ENCODE measurements at regions of chr6 and their contacts with region 1.

Region 1: DNA sequence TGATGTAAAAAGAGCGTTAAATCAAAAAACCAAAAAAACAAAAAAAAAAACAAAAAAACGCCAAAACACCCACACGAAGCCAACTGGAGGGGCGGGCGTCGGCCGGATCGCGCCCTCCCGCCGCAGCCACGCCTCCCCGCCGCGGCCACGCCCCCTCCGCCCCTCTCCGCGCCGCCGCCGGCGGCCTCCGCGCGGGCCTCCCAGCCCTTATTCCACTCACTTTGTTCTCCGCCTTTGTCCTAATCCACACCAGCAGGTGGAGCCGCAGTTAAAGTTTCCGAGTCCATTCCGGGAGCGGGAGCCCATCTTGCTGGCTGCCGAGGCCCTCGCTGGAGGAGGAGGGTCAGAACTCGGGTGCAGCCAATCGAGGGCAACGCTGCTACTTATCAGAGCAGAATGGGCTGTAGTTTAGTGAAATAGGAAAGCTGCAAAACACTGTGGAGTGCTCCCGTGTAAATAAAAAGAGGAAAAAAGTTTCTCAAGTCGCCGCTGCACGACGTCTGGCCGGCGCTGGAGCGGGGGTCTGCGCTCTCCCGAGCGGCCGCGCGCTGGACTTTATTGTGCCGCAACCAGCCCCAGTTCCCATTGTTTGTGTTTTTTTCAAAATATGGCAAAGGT is at the start of gene ASF1A:
- DNase-seq: peak; percentile 96
- H3K4me3 Mint-ChIP-seq: peak within 1 kb of the TSS; percentile 88
- H3K27ac Mint-ChIP-seq: peak within 1 kb of the TSS; percentile 96
- H3K4me1 Mint-ChIP-seq: peaks cover 48% of the 10 kb centered on the region
- H3K27me3 Mint-ChIP-seq: no peaks in the 10 kb centered on the region
- total RNA-seq, gene ASF1A: 33.9 and 34.1 TPM in 2 replicates

Region 2: GRCh38 chr6:118558464-118559217 is 335.3 kb before region 1 on chr6:
- intact Hi-C with region 1: loop called (anchors 5 kb)
- DNase-seq: no peak
- H3K4me3 Mint-ChIP-seq: peak overlapping the region; percentile 69
- H3K27ac Mint-ChIP-seq: peak overlapping the region; percentile 92
- H3K4me1 Mint-ChIP-seq: peaks cover 25% of the 10 kb centered on the region
- H3K27me3 Mint-ChIP-seq: no peaks in the 10 kb centered on the region

Region 3: DNA sequence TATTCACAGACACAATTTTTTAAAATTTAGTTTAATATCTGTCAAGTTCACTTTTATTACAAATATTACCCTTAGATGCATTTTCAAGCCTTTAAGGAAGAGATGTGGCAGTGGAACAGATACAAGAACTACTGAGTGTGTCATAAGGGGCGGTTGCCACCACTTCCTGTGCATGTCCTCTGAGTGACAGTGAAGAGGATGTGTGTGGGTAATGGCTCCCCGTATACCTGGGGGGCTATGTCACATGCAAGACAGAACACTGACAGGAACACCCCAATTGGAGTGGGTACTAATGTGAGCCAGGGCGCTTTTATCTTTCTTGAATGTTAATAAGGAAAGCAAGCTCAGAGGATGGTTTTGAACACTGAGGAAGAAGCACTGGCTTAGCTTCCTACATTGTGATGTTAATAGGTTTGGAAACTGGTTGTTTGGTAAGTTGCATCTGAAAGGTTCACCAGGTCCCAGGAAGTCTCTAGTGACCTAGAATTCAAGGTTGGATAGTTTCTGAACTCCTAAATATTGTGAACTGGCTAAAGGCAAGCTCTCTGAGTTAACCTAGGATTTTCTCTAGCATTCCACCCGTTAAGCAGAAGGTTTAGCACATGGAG is 83.4 kb before region 1 on chr6:
- intact Hi-C with region 1: loop called (anchors 2 kb)
- DNase-seq: peak; percentile 56
- H3K4me3 Mint-ChIP-seq: no peak overlapping the region
- H3K27ac Mint-ChIP-seq: peak overlapping the region; percentile 52
- H3K4me1 Mint-ChIP-seq: peaks cover 54% of the 10 kb centered on the region
- H3K27me3 Mint-ChIP-seq: no peaks in the 10 kb centered on the region

Region 4: GRCh38 chr6:118934461-118935330 is 40.8 kb after region 1 on chr6 and contains the start of gene MCM9:
- intact Hi-C with region 1: loop called (anchors 1 kb)
- DNase-seq: peak; percentile 84
- H3K4me3 Mint-ChIP-seq: peak within 1 kb of the TSS; percentile 89
- H3K27ac Mint-ChIP-seq: peak within 1 kb of the TSS; percentile 96
- H3K4me1 Mint-ChIP-seq: peaks cover 29% of the 10 kb centered on the region
- H3K27me3 Mint-ChIP-seq: no peaks in the 10 kb centered on the region
- total RNA-seq, gene MCM9: 18.6 and 21.1 TPM in 2 replicates

Region 5: DNA sequence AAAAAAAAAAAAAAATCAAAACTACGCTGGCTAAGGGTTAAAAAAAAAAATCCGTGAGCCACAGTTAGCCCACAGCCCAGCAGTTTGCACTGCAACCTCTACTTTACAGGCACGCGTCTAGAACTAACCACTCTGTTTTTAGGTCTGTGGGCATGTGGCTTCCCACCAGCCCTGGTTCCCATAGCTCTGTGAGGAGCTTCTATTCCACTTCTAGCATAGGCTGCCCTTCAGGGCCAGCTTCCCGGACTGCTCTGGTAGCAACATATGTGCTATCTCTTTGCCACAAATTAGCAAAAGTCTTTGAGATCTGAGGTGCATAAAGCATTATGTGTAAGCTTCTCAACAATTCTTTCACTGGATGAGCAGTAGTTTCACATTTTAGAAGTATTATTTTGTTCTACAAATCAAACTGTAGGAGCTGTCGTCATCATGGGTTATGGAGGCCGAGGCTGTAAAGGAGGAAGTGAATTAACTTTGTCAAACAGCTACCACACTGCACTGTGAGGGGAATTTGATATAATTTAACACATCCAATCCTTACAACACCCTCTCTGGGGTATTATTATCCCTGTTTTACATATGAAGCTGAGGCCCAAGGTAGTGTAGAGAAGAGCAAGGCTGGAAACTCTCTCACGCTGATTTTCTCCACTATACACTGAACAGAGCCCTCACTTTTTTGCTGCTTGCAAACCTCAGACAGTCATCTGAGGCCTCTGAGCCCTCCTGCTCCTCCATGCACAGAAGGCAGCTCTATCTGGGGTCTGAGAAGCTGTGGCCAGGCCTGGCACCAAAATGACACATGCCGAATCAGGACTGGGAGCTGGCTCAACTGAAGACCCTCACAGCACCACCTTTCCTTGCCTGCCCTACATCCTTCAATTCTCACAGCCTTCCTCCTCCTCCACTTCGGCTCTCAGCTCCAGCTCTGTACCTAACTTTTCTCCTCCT is 420.3 kb after region 1 on chr6:
- intact Hi-C with region 1: loop called (anchors 10 kb)
- DNase-seq: peak; percentile 39
- H3K4me3 Mint-ChIP-seq: peak overlapping the region; percentile 66
- H3K27ac Mint-ChIP-seq: peak overlapping the region; percentile 99
- H3K4me1 Mint-ChIP-seq: peaks cover 80% of the 10 kb centered on the region
- H3K27me3 Mint-ChIP-seq: no peaks in the 10 kb centered on the region

Measured in activated T-helper 2 cell treated with anti-CD3 and anti-CD28 coated beads, Interferon-gamma antibody, Interleukin-2, Interleukin-4, amounts not matched to agents 10 μg/mL and 5 μg/mL and 100 μg/mL, durations not matched to agents 14 hours and 24 hours and 36 hours (primary cell).